Activated naive CD4-positive, alpha-beta T cell treated with anti-CD3 and anti-CD28 coated beads for 36 hours (primary cell): ENCODE measurements at regions of chr5 and their contacts with region 1.

Region 1: DNA sequence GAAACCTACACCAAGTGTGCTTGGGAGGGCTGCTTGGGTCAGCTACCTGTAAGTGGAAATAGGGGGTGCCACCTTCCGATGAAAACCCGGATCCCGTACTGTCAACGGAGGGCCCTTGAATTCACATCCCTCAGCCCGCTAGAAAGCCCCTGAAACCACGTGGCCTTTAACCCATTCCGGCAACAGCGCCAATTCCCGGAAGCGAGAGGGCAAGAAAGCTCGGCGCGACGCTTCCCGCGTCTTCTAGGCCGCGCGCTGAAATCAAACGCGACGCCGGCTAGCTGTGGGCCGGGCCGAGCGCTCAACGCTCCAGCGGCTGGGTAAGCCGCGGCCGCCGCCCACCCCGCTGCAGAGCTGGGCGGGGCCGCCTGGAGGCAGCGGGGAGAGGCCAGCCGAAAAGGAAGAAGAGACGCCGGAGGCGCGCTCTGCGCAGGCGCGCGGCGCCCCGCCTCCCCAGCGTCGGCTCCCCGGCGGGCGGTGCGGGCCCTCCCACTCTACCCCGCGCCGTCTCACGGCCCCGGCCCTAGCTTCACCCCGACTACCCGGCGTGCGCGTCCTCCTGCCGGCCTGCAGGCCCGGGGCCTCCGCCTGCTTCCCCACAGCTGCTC is at the start of gene KIF2A:
- DNase-seq: peak; percentile 96
- H3K4me3 Mint-ChIP-seq: peak within 1 kb of the TSS; percentile 95
- H3K27ac Mint-ChIP-seq: peak within 1 kb of the TSS; percentile 96
- H3K4me1 Mint-ChIP-seq: peaks cover 45% of the 10 kb centered on the region
- H3K27me3 Mint-ChIP-seq: no peaks in the 10 kb centered on the region
- total RNA-seq, gene KIF2A: 101 to 117 TPM

Region 2: DNA sequence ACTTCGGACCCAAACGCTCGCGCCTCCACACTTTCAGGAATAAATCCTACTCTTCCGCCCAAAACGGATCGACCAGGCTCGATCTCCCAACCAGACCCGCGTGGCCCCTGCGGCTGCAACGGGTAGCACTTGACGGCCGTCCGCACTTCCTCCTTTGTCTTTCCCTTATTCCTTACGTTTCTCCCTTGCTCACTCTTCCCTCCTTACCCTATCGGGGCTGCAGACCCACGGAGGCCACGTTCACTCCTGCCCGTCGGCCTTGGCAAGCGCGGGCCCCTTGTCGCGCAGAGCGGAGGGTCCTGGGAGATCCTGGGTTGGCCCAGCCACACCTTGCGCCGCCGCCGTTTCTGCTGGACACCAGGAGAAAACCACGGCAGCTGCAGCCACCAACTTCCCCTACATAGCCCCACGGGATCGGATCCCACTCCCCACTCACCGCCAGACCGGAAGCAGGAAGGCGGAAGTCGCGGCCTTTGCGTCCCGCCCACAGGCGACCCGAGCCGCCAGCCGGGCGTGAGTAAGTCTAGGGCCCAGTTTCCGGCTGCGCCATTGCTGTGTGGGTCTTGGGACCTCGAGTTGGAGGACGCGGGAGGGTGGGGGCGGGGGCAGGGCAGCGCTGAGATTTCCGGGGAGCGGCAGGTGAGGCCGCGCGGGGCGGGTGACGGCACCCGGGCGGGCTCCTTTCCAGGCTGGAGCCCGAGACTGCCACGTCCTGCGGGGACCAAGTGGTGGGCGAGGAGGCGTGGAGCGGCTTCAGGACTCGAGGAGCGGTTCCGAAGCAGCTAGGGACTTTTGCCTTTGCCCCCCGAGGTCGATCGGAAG is 1143.6 kb before region 1 on chr5 and contains the start of gene SMIM15:
- CTCF ChIA-PET with region 1: no interaction called
- intact Hi-C with region 1: loop called (anchors 10 kb)
- DNase-seq: peak; percentile 90
- H3K4me3 Mint-ChIP-seq: peak within 1 kb of the TSS; percentile 97
- H3K27ac Mint-ChIP-seq: peak within 1 kb of the TSS; percentile 95
- H3K4me1 Mint-ChIP-seq: peaks cover 38% of the 10 kb centered on the region
- H3K27me3 Mint-ChIP-seq: no peaks in the 10 kb centered on the region
- total RNA-seq, gene SMIM15: 45.8 to 48.1 TPM

Region 3: DNA sequence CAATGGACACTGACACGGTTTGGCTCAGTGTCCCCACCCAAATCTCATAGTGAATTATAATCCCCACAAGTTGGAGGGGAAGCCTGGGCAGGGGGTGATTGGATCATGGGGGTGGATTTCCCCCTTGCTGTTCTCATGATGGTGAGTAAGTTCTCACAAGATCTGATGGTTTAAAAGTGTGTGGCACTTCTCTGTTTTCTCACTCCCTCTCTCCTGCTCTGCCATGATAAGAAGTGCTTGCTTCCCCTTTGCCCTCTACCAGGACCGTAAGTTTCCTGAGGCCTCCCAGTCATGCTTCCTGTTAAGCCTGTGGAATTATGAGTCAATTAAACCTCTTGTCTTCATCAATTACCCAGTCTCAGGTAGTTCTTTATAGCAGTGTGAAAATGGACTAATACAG is 115.6 kb before region 1 on chr5:
- CTCF ChIA-PET with region 1: no interaction called
- intact Hi-C with region 1: no loop called
- DNase-seq: no peak
- H3K4me3 Mint-ChIP-seq: no peak overlapping the region
- H3K27ac Mint-ChIP-seq: no peak overlapping the region
- H3K4me1 Mint-ChIP-seq: no peaks in the 10 kb centered on the region
- H3K27me3 Mint-ChIP-seq: peaks cover 6% of the 10 kb centered on the region

Region 4: DNA sequence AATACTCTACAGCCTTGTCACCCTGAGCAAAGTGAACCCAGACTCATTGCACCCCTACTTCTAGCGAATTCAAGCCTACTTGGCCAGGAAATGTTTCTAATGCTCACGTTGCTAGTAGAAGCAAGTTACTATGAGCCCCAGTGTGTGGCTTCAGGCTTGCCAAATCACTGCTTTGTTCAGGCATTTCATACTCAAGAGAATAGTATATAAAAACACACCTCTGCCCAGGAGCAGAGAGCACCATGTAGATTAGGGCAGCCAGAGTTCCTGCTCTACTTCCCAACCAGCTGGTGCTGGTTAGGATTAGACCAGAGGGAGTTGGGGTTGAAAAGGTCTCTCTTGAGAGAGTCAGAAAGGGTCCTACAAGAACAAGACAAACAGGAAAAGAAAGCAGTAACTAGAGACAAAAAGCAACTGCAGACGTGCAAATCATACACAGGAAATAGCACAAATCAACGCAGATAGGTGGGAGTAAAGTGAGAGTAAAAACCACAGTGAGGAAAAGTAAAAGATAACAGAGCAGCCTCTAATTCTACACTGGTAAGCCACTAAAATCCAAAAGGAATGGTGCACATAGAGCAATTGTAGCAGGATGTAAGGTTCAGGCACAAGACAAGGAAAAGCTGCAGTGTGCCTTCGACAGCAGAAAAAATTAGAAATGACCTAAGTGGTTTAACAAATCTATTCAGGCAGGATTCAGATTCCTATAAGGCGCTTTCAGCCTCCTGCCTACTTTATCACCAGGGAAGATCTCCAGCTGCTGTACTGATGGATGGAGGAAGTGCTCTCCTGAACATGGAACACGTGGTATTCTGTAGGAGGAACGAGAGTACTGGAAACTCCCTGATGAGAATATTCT is 49.4 kb before region 1 on chr5:
- CTCF ChIA-PET with region 1: no interaction called
- intact Hi-C with region 1: loop called (anchors 1 kb)
- DNase-seq: no peak
- H3K4me3 Mint-ChIP-seq: peak overlapping the region; percentile 40
- H3K27ac Mint-ChIP-seq: peak overlapping the region; percentile 91
- H3K4me1 Mint-ChIP-seq: peaks cover 67% of the 10 kb centered on the region
- H3K27me3 Mint-ChIP-seq: no peaks in the 10 kb centered on the region

Region 5: GRCh38 chr5:62284946-62285891 is 20.6 kb before region 1 on chr5:
- CTCF ChIA-PET with region 1: interaction called, 4 read pairs
- intact Hi-C with region 1: loop called (anchors 1 kb)
- DNase-seq: peak; percentile 74
- H3K4me3 Mint-ChIP-seq: no peak overlapping the region
- H3K27ac Mint-ChIP-seq: peak overlapping the region; percentile 81
- H3K4me1 Mint-ChIP-seq: peaks cover 39% of the 10 kb centered on the region
- H3K27me3 Mint-ChIP-seq: no peaks in the 10 kb centered on the region

Region 6: DNA sequence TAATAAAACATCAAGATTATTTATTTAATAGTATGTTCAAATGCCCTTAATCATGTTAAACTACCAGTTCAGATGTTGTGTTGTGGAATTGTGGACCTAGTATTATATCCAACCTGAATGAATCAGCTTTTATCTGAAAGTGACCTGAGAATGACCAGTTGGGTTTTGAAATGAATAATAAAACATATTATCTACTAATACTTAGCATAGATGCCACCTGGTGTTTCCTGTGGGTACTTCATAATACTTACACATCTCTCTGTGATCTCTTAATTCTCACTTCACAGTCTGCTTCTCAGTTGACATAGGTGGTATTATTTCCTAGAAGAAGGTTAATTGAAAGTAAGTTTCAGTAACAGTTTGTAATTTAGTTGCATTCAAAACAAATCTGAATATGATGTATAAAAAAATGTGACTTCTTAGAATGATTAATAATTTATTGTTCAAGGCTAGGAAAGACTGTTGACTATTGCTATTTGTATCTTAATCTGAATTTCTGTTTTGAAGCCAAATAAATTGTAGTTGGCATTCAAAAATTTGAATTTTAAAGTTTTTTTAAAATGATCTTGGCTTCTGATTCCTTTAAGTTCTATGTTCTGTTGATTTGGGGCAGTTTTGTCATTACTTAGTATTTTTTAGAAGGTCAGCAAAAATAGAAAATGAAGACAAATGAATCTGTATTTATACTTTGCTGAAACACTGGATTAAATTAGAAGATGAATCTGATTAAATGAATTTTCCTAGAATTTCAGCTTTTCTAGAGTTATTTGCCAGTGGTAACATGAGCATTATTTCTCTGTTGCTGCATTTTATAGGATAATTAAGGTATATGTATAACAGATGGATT is 48.4 kb after region 1 on chr5:
- CTCF ChIA-PET with region 1: interaction called, 4 read pairs
- intact Hi-C with region 1: loop called (anchors 1 kb)
- DNase-seq: no peak
- H3K4me3 Mint-ChIP-seq: no peak overlapping the region
- H3K27ac Mint-ChIP-seq: no peak overlapping the region
- H3K4me1 Mint-ChIP-seq: no peaks in the 10 kb centered on the region
- H3K27me3 Mint-ChIP-seq: no peaks in the 10 kb centered on the region

Region 7: DNA sequence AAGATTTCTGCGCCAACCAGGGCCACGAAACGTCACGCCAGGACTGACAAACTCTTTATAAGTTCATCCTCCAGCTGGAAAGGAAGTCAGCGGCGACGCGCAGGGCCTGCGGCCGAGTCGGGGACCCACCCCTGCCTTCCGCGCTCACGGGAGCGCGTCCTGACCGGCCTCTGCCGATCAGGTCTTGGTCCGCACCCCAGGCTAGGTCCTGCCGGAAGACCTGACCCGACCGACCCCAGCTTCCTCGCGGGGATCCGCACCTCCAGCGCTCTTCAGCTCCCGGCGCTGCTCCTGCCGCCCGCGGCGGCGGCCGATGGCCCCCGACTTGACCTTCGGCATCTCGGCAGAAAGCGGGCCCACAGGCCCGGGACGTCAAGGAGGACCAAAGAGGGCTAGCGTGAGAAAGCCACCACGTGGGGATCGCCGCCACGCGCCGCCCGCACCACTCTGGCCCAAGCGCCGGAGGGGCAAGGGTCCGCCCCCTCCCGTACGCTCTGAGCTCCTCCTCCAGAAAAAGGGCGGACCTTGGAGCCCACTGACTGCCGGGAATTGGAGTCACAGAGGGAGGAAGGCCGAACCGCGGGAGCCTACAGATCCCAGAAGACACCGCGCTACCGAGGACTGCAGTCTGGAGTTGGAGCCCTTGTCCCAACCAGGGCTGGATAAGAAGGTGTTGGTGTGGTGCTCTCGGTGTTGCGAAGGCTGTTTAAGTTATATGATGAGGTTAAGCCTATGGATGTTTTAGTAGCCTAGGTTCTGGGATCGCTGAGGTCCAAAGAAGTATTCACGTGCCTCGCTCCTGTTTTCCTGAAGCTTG is 97.8 kb after region 1 on chr5 and contains the start of gene DIMT1:
- CTCF ChIA-PET with region 1: no interaction called
- intact Hi-C with region 1: loop called (anchors 1 kb)
- DNase-seq: peak; percentile 97
- H3K4me3 Mint-ChIP-seq: peak within 1 kb of the TSS; percentile 98
- H3K27ac Mint-ChIP-seq: peak within 1 kb of the TSS; percentile 90
- H3K4me1 Mint-ChIP-seq: peaks cover 19% of the 10 kb centered on the region
- H3K27me3 Mint-ChIP-seq: no peaks in the 10 kb centered on the region
- total RNA-seq, gene DIMT1: 47.4 to 48.4 TPM

Region 8: GRCh38 chr5:62412537-62413329 is 106.9 kb after region 1 on chr5 and contains the start of gene IPO11:
- CTCF ChIA-PET with region 1: no interaction called
- intact Hi-C with region 1: loop called (anchors 1 kb)
- DNase-seq: peak; percentile 99
- H3K4me3 Mint-ChIP-seq: peak within 1 kb of the TSS; percentile 88
- H3K27ac Mint-ChIP-seq: peak within 1 kb of the TSS; percentile 86
- H3K4me1 Mint-ChIP-seq: peaks cover 26% of the 10 kb centered on the region
- H3K27me3 Mint-ChIP-seq: no peaks in the 10 kb centered on the region
- total RNA-seq, gene IPO11: 54.8 to 57.2 TPM